Activated CD4-positive, alpha-beta T cell treated with anti-CD3 and anti-CD28 coated beads for 36 hours (primary cell): ENCODE measurements at regions of chr14 and their contacts with region 1.

Region 1: GRCh38 chr14:64636208-64636979 is 67.8 kb upstream of the PLEKHG3 start:
- DNase-seq: peak; percentile 83
- ATAC-seq: peak; percentile 98
- H3K4me3 Mint-ChIP-seq: no peak overlapping the region
- H3K27ac Mint-ChIP-seq: no peak overlapping the region
- H3K4me1 Mint-ChIP-seq: peaks cover 3% of the 10 kb centered on the region
- H3K27me3 Mint-ChIP-seq: peaks cover 3% of the 10 kb centered on the region

Region 2: GRCh38 chr14:63972323-63972932 is 664.0 kb before region 1 on chr14:
- CTCF ChIA-PET with region 1: no interaction called
- POLR2A ChIA-PET with region 1: no interaction called
- intact Hi-C with region 1: no loop called
- DNase-seq: no peak
- ATAC-seq: no peak
- H3K4me3 Mint-ChIP-seq: no peak overlapping the region
- H3K27ac Mint-ChIP-seq: no peak overlapping the region
- H3K4me1 Mint-ChIP-seq: no peaks in the 10 kb centered on the region
- H3K27me3 Mint-ChIP-seq: no peaks in the 10 kb centered on the region

Region 3: DNA sequence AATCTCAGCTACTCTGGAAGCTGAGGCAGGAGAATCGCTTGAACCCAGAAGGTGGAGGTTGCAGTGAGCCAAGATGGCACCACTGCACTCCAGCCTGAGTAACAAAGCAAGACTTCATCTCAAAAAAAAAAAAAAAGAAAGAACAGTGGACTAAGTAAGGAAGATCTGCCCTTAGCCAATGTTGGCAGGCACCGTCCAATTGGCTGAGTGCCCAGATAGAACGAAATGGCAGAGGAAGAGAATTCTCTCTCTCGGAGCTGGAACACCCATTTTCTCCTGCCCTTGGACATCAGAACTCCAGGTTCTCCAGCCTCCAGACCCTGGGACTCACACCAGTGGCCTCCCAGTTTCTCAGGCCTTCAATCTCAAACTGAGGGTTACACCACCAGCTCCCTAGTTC is 392.1 kb before region 1 on chr14:
- CTCF ChIA-PET with region 1: no interaction called
- POLR2A ChIA-PET with region 1: no interaction called
- intact Hi-C with region 1: no loop called
- DNase-seq: no peak
- ATAC-seq: no peak
- H3K4me3 Mint-ChIP-seq: no peak overlapping the region
- H3K27ac Mint-ChIP-seq: no peak overlapping the region
- H3K4me1 Mint-ChIP-seq: no peaks in the 10 kb centered on the region
- H3K27me3 Mint-ChIP-seq: peaks cover 13% of the 10 kb centered on the region

Region 4: GRCh38 chr14:64338616-64339316 is 297.6 kb before region 1 on chr14:
- CTCF ChIA-PET with region 1: interaction called, 32 read pairs
- POLR2A ChIA-PET with region 1: no interaction called
- intact Hi-C with region 1: no loop called
- DNase-seq: peak; percentile 92
- ATAC-seq: peak; percentile 88
- H3K4me3 Mint-ChIP-seq: peak overlapping the region; percentile 93
- H3K27ac Mint-ChIP-seq: peak overlapping the region; percentile 87
- H3K4me1 Mint-ChIP-seq: peaks cover 18% of the 10 kb centered on the region
- H3K27me3 Mint-ChIP-seq: no peaks in the 10 kb centered on the region

Region 5: DNA sequence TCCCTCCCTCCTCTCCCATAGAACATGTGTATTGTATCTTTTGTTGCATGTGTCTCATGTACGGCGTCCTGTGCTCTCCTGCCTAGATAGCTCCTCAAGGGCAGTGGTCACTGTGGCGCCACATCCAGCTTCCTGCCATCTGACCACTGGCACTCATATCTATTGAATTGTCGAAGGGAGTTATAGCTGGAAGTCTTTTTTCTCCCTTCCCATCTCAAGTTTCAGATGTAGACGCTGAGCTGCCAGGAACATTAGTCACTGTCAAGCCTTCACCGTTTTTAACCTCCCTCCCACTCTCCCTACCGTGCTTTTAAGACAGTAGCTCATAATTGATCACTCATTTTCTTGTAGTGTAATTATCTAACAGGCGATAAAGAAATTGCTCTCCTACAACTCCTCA is 215.2 kb before region 1 on chr14:
- CTCF ChIA-PET with region 1: no interaction called
- POLR2A ChIA-PET with region 1: no interaction called
- intact Hi-C with region 1: loop called in 1 of 2 experiments (anchors 5 kb)
- DNase-seq: no peak
- ATAC-seq: no peak
- H3K4me3 Mint-ChIP-seq: no peak overlapping the region
- H3K27ac Mint-ChIP-seq: no peak overlapping the region
- H3K4me1 Mint-ChIP-seq: peaks cover 12% of the 10 kb centered on the region
- H3K27me3 Mint-ChIP-seq: no peaks in the 10 kb centered on the region

Region 6: DNA sequence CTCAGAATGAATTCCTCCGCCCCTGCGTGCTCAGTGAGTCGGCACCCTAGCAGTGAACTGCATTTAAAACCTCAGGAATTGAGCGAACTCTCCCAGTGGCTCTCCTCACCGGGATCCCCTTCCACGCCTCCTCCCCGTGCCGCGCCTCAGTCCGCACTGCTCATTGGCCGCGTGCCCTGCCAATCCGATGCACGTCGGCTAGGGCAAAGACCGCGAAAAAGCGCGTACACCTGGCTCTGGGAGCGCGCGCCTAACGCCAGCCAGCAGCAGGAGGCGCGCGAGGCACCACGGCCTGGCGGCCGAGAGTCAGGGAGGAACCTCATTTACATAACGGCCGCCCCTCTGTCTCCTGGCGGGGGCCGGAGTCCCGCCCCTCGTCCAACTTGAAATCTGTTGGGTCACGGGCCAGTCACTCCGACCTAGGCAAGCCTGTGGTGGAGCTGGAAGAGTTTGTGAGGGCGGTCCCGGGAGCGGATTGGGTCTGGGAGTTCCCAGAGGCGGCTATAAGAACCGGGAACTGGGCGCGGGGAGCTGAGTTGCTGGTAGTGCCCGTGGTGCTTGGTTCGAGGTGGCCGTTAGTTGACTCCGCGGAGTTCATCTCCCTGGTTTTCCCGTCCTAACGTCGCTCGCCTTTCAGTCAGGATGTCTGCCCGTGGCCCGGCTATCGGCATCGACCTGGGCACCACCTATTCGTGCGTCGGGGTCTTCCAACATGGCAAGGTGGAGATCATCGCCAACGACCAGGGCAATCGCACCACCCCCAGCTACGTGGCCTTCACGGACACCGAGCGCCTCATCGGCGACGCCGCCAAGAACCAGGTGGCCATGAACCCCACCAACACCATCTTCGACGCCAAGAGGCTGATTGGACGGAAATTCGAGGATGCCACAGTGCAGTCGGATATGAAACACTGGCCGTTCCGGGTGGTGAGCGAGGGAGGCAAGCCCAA is 95.9 kb before region 1 on chr14 and contains the start of gene HSPA2:
- CTCF ChIA-PET with region 1: interaction called, 3 read pairs
- POLR2A ChIA-PET with region 1: interaction called, 5 read pairs
- intact Hi-C with region 1: loop called (anchors 1 to 2 kb)
- DNase-seq: peak; percentile 97
- ATAC-seq: peak; percentile 95
- H3K4me3 Mint-ChIP-seq: peak within 1 kb of the TSS; percentile 81
- H3K27ac Mint-ChIP-seq: peak within 1 kb of the TSS; percentile 96
- H3K4me1 Mint-ChIP-seq: peaks cover 28% of the 10 kb centered on the region
- H3K27me3 Mint-ChIP-seq: peaks cover 39% of the 10 kb centered on the region
- total RNA-seq, gene HSPA2: 3.2 to 4.1 TPM

Region 7: DNA sequence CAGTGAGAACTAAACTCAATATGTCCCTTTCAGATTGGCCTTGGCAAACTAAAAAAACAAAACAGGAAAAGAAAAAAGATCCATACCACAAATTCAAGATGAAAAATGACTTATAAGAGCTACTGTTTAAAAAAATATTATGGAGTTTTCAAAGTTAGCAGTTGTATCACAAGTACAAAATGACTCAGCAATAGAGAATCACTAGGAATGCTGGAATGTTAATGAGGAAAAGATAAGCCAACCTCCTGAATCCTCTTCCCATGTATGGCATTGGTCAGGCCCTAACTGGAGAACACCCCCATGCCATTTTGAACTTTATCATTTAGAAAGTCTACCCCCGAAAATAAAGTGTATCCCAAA is 24.4 kb before region 1 on chr14:
- CTCF ChIA-PET with region 1: interaction called, 35 read pairs
- POLR2A ChIA-PET with region 1: no interaction called
- intact Hi-C with region 1: no loop called
- DNase-seq: no peak
- ATAC-seq: no peak
- H3K4me3 Mint-ChIP-seq: no peak overlapping the region
- H3K27ac Mint-ChIP-seq: no peak overlapping the region
- H3K4me1 Mint-ChIP-seq: no peaks in the 10 kb centered on the region
- H3K27me3 Mint-ChIP-seq: no peaks in the 10 kb centered on the region

Region 8: DNA sequence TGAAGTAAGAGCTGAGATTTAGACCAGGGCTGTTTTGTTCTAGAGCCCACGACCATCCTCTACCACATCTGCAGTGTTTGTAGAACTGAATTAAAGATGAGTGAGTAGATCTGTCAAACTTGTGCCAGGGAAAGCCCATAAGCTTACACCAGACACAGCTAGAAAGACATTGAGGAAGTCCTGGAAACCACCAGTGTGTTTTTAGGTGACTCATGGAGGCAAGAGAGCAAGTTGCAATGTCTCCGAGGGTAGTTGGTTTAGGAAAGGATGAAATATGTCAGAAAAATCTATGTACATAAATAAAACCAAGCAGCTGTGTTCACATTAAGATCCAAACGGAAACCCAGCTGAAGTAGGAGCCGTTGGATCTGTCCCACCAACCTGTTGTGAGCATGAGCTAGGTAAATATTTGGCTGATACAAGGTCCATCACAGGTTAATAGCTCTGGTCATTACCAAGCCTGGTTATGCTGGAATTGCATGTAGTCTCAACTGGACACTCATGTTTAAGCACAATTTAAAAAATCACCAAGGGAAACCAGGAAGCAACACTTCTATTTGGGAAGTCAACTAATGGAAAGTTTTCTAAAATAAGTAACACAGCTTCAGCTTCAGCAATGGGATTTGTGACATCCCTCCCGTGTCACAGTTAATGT is 18.0 kb after region 1 on chr14:
- CTCF ChIA-PET with region 1: interaction called, 13 read pairs
- POLR2A ChIA-PET with region 1: no interaction called
- intact Hi-C with region 1: no loop called
- DNase-seq: no peak
- ATAC-seq: peak; percentile 92
- H3K4me3 Mint-ChIP-seq: no peak overlapping the region
- H3K27ac Mint-ChIP-seq: no peak overlapping the region
- H3K4me1 Mint-ChIP-seq: peaks cover 15% of the 10 kb centered on the region
- H3K27me3 Mint-ChIP-seq: peaks cover 10% of the 10 kb centered on the region